Naive thymus-derived CD4-positive, alpha-beta T cell (primary cell): ENCODE measurements at regions of chr2 and their contacts with region 1.

Region 1: GRCh38 chr2:189440947-189441708 is at the start of gene WDR75:
- DNase-seq: peak; percentile 73 to 96 (median 94)
- ATAC-seq: peak; percentile 97
- H3K4me3 ChIP-seq: peak within 1 kb of the TSS; percentile 83
- H3K4me3 Mint-ChIP-seq: peak within 1 kb of the TSS in 6 of 10 donors; percentile 99 to 100 (median 100)
- H3K27ac ChIP-seq: peak within 1 kb of the TSS; percentile 92
- H3K27ac Mint-ChIP-seq: peak within 1 kb of the TSS in 8 of 9 donors; percentile 97 to 100 (median 100)
- H3K4me1 ChIP-seq: peaks cover 10 to 14% of the 10 kb centered on the region in 2 donors
- H3K4me1 Mint-ChIP-seq: peaks cover 3 to 13% (median 8%) of the 10 kb centered on the region in 7 donors
- H3K27me3 ChIP-seq: no peaks in the 10 kb centered on the region
- H3K27me3 Mint-ChIP-seq: peaks cover 0 to 10% (median 0%) of the 10 kb centered on the region in 5 donors
- total RNA-seq, gene WDR75: 39.9 to 67.4 (median 60.7) TPM

Region 2: GRCh38 chr2:189014449-189015138 is 426.5 kb before region 1 on chr2:
- CTCF ChIA-PET with region 1: no interaction called
- POLR2A ChIA-PET with region 1: no interaction called
- intact Hi-C with region 1: no loop called
- DNase-seq: no peak
- ATAC-seq: no peak
- H3K4me3 ChIP-seq: no peak overlapping the region
- H3K4me3 Mint-ChIP-seq: no peak overlapping the region
- H3K27ac ChIP-seq: no peak overlapping the region
- H3K27ac Mint-ChIP-seq: no peak overlapping the region
- H3K4me1 ChIP-seq: no peaks in the 10 kb centered on the region
- H3K4me1 Mint-ChIP-seq: no peaks in the 10 kb centered on the region
- H3K27me3 ChIP-seq: no peaks in the 10 kb centered on the region
- H3K27me3 Mint-ChIP-seq: peaks cover 0 to 13% (median 0%) of the 10 kb centered on the region in 5 donors

Region 3: GRCh38 chr2:189454009-189454408 is 12.9 kb after region 1 on chr2:
- CTCF ChIA-PET with region 1: interaction called, 3 read pairs
- POLR2A ChIA-PET with region 1: interaction called, 4 read pairs
- intact Hi-C with region 1: loop called in 1 of 2 experiments (anchors 2 kb)
- DNase-seq: no peak
- ATAC-seq: no peak
- H3K4me3 ChIP-seq: no peak overlapping the region
- H3K4me3 Mint-ChIP-seq: no peak overlapping the region
- H3K27ac ChIP-seq: no peak overlapping the region
- H3K27ac Mint-ChIP-seq: peak overlapping the region in 3 of 9 donors; percentile 4 to 58 (median 7)
- H3K4me1 ChIP-seq: no peaks in the 10 kb centered on the region
- H3K4me1 Mint-ChIP-seq: peaks cover 0 to 10% (median 3%) of the 10 kb centered on the region in 7 donors
- H3K27me3 ChIP-seq: no peaks in the 10 kb centered on the region
- H3K27me3 Mint-ChIP-seq: no peaks in the 10 kb centered on the region

Region 4: DNA sequence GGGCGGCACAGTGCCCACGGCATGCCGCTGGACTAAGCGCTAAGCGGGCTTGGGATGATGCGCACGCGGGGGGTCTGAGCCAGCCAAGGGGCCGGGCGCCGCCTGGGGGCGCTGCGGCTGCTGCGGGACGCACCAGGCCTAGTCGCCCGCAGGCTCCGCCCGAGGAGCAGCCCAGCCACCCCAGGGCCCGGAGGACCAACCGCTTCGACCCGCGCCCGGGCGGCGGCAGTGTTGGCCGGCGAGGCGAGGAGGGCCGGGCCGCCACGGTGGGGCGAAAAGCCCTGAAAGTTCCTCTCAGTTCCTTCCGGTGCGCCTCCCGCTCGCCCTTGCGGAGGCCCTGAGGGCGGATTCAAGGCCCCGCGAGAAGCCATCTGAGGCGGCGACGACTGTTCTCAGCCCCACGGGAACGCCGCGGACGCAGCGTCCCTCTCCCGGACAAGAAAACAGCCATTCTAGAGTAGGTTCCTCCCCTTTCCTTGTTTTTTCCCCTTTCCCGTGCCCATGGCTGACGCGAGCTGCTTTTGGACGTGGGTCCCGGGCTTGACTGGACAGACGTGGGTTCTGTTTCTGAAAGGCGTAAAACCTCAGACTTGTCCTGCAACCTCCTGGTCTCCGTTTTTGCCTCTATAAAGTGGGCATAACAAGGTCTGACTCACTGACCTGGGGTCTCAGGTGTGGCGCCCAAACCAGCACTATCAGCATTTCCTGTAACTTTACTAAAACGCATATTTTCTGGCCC is 233.4 kb after region 1 on chr2 and contains the start of gene ANKAR:
- CTCF ChIA-PET with region 1: no interaction called
- POLR2A ChIA-PET with region 1: no interaction called
- intact Hi-C with region 1: loop called in 1 of 2 experiments (anchors 1 kb)
- DNase-seq: peak; percentile 71 to 88 (median 84)
- ATAC-seq: peak; percentile 98
- H3K4me3 ChIP-seq: peak within 1 kb of the TSS; percentile 62
- H3K4me3 Mint-ChIP-seq: peak within 1 kb of the TSS; percentile 88 to 96 (median 95)
- H3K27ac ChIP-seq: peak within 1 kb of the TSS; percentile 86
- H3K27ac Mint-ChIP-seq: peak within 1 kb of the TSS; percentile 96 to 99 (median 97)
- H3K4me1 ChIP-seq: peaks cover 9 to 12% of the 10 kb centered on the region in 2 donors
- H3K4me1 Mint-ChIP-seq: peaks cover 17 to 49% (median 40%) of the 10 kb centered on the region in 7 donors
- H3K27me3 ChIP-seq: no peaks in the 10 kb centered on the region
- H3K27me3 Mint-ChIP-seq: no peaks in the 10 kb centered on the region
- total RNA-seq, gene ANKAR: 4.3 to 17.9 (median 10.3) TPM

Region 5: DNA sequence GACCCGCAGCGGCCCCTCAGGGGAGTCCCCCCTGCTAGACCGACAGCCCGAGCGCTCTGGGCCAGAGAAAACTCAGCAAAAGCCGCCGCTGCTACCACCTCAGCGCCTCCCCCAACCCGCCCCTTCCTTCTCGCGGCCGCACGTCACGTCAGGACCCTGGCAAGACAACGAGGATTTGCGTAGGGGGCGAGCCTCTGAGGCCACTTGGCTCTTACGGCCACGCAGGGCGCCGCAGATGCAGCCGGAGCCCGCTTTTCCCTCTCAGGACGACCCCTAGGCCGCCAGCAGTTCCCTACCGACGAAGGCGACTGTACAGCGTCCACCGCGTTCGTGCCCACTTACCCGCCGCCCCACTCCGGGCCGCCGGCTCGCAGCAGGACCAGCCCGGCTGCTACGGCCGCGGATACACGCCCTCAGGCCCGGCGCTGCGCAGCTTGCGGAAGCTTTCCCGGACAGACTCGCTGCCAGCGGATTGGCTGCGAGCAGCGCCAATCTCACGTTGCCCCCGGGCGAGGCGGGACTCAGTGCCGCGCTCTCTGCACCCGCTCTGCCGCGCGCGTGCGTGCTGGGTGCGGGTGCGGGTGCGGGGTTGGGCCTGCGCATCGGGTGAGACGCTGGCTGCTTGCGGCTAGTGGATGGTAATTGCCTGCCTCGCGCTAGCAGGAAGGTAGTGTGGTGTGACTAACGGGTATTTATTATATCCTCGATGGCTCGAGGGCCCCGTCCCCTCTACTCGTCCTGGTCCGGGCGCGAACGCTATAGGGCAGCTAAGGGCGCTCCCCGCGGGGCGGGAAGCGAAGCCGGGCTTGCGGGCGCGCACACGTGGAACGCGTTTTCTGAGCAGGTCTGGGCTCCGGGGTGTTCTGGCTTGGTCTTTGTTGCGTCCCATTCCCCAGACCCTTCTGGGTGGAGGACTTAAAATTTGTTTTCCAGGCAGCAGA is 343.1 kb after region 1 on chr2 and contains the starts of genes ORMDL1 and PMS1:
- CTCF ChIA-PET with region 1: no interaction called
- POLR2A ChIA-PET with region 1: interaction called, 6 read pairs
- intact Hi-C with region 1: loop called (anchors 1 kb)
- DNase-seq: peak; percentile 90 to 96 (median 94)
- ATAC-seq: peak; percentile 95
- H3K4me3 ChIP-seq: peak within 1 kb of the TSS; percentile 76
- H3K4me3 Mint-ChIP-seq: peak within 1 kb of the TSS; percentile 86 to 97 (median 94)
- H3K27ac ChIP-seq: peak within 1 kb of the TSS; percentile 92
- H3K27ac Mint-ChIP-seq: peak within 1 kb of the TSS; percentile 89 to 97 (median 95)
- H3K4me1 ChIP-seq: peaks cover 21 to 24% of the 10 kb centered on the region in 2 donors
- H3K4me1 Mint-ChIP-seq: peaks cover 26 to 72% (median 57%) of the 10 kb centered on the region in 7 donors
- H3K27me3 ChIP-seq: no peaks in the 10 kb centered on the region
- H3K27me3 Mint-ChIP-seq: no peaks in the 10 kb centered on the region
- total RNA-seq, gene ORMDL1: 80.1 to 208 (median 142) TPM
- total RNA-seq, gene PMS1: 18.2 to 30.1 (median 22.5) TPM

Region 6: DNA sequence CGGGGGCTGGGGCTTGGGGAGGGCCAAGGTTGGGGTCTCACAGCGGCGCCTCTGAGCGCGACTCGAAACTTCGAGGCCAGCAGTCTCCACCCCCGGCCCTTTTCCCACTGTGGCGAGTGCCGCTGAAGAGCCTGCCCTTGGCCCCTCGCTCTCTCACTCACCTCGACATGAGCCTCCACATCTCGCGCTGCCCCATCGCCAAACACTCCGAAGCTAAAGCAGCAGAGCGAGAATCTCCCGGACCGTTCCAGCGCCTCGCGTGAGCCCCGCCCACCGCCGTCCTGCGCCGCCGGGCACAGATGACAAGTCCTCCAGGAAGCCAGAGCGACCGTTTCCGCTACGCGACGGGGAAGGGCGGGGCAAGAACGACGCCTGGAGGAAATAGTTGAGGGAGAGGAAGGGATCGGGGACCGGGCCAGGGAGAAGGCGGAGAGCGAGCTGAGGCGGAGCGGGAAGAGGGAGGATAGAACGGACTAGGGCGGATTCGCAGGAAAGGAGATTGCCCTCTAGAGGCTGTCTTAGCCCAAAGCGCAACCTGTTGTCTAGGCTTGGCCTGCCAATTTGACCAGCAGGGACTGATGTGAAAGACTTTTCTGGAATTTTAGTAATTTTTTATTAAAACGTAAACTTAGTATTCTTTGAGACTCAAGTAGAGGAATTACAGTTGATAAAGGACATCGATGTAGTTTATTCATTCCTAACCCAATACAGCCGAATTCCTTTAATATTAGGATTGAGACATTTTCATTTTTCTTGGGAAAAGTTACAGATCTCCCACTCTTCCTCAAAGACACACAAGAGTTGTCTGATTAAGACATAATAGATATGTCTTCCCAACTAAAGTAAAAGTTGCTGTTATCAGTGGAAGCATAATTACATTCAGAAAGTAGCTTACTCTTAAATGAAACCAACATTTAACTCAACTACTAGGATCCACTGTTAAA is 878.7 kb after region 1 on chr2 and contains the start of gene HIBCH:
- CTCF ChIA-PET with region 1: no interaction called
- POLR2A ChIA-PET with region 1: no interaction called
- intact Hi-C with region 1: loop called (anchors 1 to 2 kb)
- DNase-seq: peak; percentile 56 to 88 (median 68)
- ATAC-seq: peak; percentile 94
- H3K4me3 ChIP-seq: peak within 1 kb of the TSS; percentile 83
- H3K4me3 Mint-ChIP-seq: peak within 1 kb of the TSS; percentile 85 to 100 (median 97)
- H3K27ac ChIP-seq: peak within 1 kb of the TSS; percentile 82
- H3K27ac Mint-ChIP-seq: peak within 1 kb of the TSS; percentile 91 to 99 (median 95)
- H3K4me1 ChIP-seq: peaks cover 8 to 13% of the 10 kb centered on the region in 2 donors
- H3K4me1 Mint-ChIP-seq: peaks cover 27 to 54% (median 48%) of the 10 kb centered on the region in 7 donors
- H3K27me3 ChIP-seq: no peaks in the 10 kb centered on the region
- H3K27me3 Mint-ChIP-seq: no peaks in the 10 kb centered on the region
- total RNA-seq, gene HIBCH: 11.3 to 25.0 (median 21.6) TPM

Region 7: GRCh38 chr2:191020221-191020741 is 1579.2 kb after region 1 on chr2:
- CTCF ChIA-PET with region 1: no interaction called
- POLR2A ChIA-PET with region 1: no interaction called
- intact Hi-C with region 1: loop called in 1 of 2 experiments (anchors 5 kb)
- DNase-seq: peak; percentile 89 to 99 (median 94)
- ATAC-seq: peak; percentile 88
- H3K4me3 ChIP-seq: peak overlapping the region; percentile 78
- H3K4me3 Mint-ChIP-seq: no peak overlapping the region
- H3K27ac ChIP-seq: peak overlapping the region; percentile 82
- H3K27ac Mint-ChIP-seq: no peak overlapping the region
- H3K4me1 ChIP-seq: peaks cover 44 to 48% of the 10 kb centered on the region in 2 donors
- H3K4me1 Mint-ChIP-seq: peaks cover 11 to 46% (median 32%) of the 10 kb centered on the region in 7 donors
- H3K27me3 ChIP-seq: no peaks in the 10 kb centered on the region
- H3K27me3 Mint-ChIP-seq: peaks cover 0 to 2% (median 0%) of the 10 kb centered on the region in 5 donors